ENCODE measurements at regions of chr17 and their contacts with region 1.

Region 1: DNA sequence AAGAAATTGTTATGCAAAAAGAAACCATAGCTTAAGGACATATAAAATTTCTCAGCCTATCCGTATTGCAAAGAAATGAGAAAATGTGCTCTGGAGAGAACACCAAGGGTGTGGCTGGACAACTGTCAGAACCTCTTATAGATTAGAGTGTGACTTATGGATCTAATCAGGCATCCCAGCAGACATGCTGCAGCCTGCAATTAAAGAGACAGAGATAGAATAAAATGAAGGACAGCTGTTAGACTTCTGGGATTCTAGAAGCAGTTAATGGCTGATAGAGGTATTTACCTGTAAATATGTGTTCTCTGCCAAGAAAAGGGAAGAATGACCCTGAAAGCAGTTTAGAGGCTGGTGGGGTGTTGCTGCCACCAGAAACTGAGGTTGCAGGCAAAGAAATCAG is 160.1 kb upstream of the KIF2B start:
- DNase-seq: no peak
- H3K4me3 ChIP-seq: no peak overlapping the region
- H3K27ac ChIP-seq: no peak overlapping the region
- H3K4me1 ChIP-seq: no peaks in the 10 kb centered on the region
- H3K27me3 ChIP-seq: no peaks in the 10 kb centered on the region
- CTCF ChIP-seq: no peak

Region 2: GRCh38 chr17:52451292-52451861 is 1211.2 kb before region 1 on chr17:
- CTCF ChIA-PET with region 1: no interaction called
- POLR2A ChIA-PET with region 1: no interaction called
- intact Hi-C with region 1: no loop called
- DNase-seq: no peak
- H3K4me3 ChIP-seq: no peak overlapping the region
- H3K27ac ChIP-seq: no peak overlapping the region
- H3K4me1 ChIP-seq: no peaks in the 10 kb centered on the region
- H3K27me3 ChIP-seq: no peaks in the 10 kb centered on the region
- CTCF ChIP-seq: no peak

Region 3: DNA sequence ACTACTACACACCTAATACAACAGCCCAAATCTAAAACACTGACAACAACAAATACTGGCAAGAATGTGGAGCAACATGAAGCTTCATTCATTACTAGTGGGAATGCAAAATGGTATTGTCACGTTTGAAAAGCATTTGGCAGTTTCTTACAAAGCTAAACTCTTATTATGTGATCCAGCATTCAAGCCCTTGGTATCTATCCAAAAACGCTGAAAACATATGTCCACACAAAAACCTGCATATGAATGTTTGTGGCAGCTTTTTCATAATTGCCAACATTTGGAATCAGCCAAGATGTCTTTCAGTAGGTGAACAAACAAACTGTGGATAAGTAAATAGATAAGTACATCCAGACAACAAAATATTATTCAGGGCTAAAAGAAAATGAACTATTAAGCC is 341.0 kb before region 1 on chr17:
- CTCF ChIA-PET with region 1: no interaction called
- POLR2A ChIA-PET with region 1: no interaction called
- intact Hi-C with region 1: no loop called
- DNase-seq: no peak
- H3K4me3 ChIP-seq: no peak overlapping the region
- H3K27ac ChIP-seq: no peak overlapping the region
- H3K4me1 ChIP-seq: no peaks in the 10 kb centered on the region
- H3K27me3 ChIP-seq: no peaks in the 10 kb centered on the region
- CTCF ChIP-seq: no peak

Region 4: GRCh38 chr17:53607475-53607874 is 55.1 kb before region 1 on chr17:
- CTCF ChIA-PET with region 1: no interaction called
- POLR2A ChIA-PET with region 1: no interaction called
- intact Hi-C with region 1: loop called (anchors 10 kb)
- DNase-seq: peak; percentile 5
- H3K4me3 ChIP-seq: no peak overlapping the region
- H3K27ac ChIP-seq: no peak overlapping the region
- H3K4me1 ChIP-seq: no peaks in the 10 kb centered on the region
- H3K27me3 ChIP-seq: no peaks in the 10 kb centered on the region
- CTCF ChIP-seq: no peak

Region 5: GRCh38 chr17:53907435-53907834 is 244.8 kb after region 1 on chr17:
- CTCF ChIA-PET with region 1: no interaction called
- POLR2A ChIA-PET with region 1: no interaction called
- intact Hi-C with region 1: no loop called
- DNase-seq: no peak
- H3K4me3 ChIP-seq: no peak overlapping the region
- H3K27ac ChIP-seq: no peak overlapping the region
- H3K4me1 ChIP-seq: no peaks in the 10 kb centered on the region
- H3K27me3 ChIP-seq: no peaks in the 10 kb centered on the region
- CTCF ChIP-seq: no peak